Dorsolateral prefrontal cortex (tissue), 120 donors: ENCODE measurements at regions of chr17 and their contacts with region 1.

Region 1: GRCh38 chr17:76523084-76524037 is 14.1 kb downstream of the CYGB start:
- DNase-seq: peak in 9 of 10 donors; percentile 60 to 88 (median 68)
- H3K4me3 ChIP-seq: peak overlapping the region in 22 of 59 donors; percentile 2 to 38 (median 24)
- H3K27ac ChIP-seq: peak overlapping the region in 3 of 59 donors; percentile 21 to 40 (median 38)
- H3K27me3 ChIP-seq: no peaks in the 10 kb centered on the region
- CTCF ChIP-seq: peak; percentile 93 to 100 (median 100)

Region 2: DNA sequence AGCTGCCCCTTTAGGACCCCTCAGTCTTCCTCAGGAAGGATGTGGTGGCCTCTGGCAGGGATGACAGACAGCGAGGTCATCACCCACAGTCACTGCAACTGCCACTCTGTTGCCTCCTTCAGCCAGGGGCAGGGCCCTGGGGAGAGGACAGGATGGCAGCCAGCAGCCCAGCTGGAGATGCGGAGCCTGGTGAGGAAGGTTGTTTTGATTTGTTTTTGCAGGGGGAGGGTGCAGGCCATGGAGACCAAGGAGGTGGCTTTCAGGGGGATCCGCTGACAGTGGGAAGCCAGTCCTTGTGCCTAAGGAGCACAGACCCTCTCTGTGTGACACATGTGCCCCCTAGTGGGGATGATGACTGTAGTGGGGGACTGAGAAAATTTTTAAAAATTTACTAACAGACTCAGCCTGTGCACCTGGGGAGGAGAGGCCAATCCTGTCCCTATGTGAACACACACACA is 23.9 kb after region 1 on chr17:
- intact Hi-C with region 1: loop called (anchors 1 to 2 kb)
- DNase-seq: peak in 6 of 10 donors; percentile 59 to 73 (median 70)
- H3K4me3 ChIP-seq: peak overlapping the region in 3 of 59 donors; percentile 7 to 68 (median 22)
- H3K27ac ChIP-seq: peak overlapping the region in 47 of 59 donors; percentile 1 to 98 (median 65)
- H3K27me3 ChIP-seq: no peaks in the 10 kb centered on the region
- CTCF ChIP-seq: peak; percentile 54 to 88 (median 76)

Region 3: GRCh38 chr17:76585818-76586593 is 62.6 kb after region 1 on chr17 and contains the start of gene ST6GALNAC2:
- intact Hi-C with region 1: loop called in 1 of 2 experiments (anchors 2 kb)
- DNase-seq: peak in 1 of 10 donors; percentile 64
- H3K4me3 ChIP-seq: peak within 1 kb of the TSS; percentile 26 to 72 (median 54)
- H3K27ac ChIP-seq: peak within 1 kb of the TSS in 1 of 59 donors; percentile 36
- H3K27me3 ChIP-seq: peaks cover 0 to 36% (median 18%) of the 10 kb centered on the region in 45 donors
- CTCF ChIP-seq: peak in 41 of 56 donors; percentile 7 to 65 (median 33)
- total RNA-seq, gene ST6GALNAC2: 0.38 to 10.0 (median 1.8) TPM in 115 of 120 experiments, not detected in the others

Region 4: GRCh38 chr17:76623271-76624146 is 100.1 kb after region 1 on chr17:
- intact Hi-C with region 1: loop called (anchors 2 to 10 kb)
- DNase-seq: peak; percentile 61 to 85 (median 68)
- H3K4me3 ChIP-seq: peak overlapping the region in 2 of 59 donors; percentile 23 to 28
- H3K27ac ChIP-seq: no peak overlapping the region
- H3K27me3 ChIP-seq: no peaks in the 10 kb centered on the region
- CTCF ChIP-seq: peak; percentile 83 to 99 (median 96)

Region 5: DNA sequence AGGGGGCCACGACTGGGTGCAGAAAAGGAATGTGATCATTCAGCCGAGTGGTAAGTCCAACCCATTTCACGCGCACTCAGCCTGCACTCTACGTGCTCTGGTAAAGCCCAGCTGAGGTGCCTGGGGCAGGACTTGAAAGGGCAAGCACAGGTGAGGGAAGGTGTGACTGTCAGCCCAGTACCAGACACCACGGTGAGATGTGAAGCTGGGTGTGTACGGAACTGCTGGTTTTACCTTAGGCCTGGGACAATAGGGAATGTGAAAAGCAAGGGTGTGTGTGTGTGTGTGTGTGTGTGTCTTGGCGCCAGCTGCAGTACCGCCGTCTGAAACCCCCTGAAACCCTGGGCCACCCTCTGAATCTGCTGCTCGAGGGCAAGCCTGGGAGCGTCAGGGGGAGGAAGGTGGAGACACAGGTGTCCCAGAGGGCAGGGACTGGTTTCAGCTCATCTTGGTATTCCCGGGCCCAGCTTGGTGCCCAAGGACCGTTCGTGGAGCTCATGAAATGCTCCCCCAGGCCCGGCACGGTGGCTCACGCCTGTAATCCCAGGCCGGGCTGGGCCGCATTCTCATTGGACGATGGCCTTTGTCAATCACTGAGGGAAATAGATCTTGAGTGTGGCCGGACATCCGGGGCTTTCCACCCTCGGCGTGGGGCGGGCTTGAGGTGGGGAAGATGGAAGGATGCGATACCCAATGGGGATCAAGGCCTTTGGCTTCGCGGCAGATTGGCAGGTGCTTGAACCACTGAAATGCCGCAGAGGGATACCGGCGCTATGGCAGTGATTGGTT is 148.0 kb after region 1 on chr17:
- intact Hi-C with region 1: loop called in 1 of 2 experiments (anchors 10 kb)
- DNase-seq: peak; percentile 100
- H3K4me3 ChIP-seq: peak overlapping the region; percentile 34 to 96 (median 75)
- H3K27ac ChIP-seq: peak overlapping the region; percentile 16 to 97 (median 90)
- H3K27me3 ChIP-seq: no peaks in the 10 kb centered on the region
- CTCF ChIP-seq: peak in 10 of 56 donors; percentile 3 to 34 (median 14)

Region 6: GRCh38 chr17:76893623-76894334 is 370.4 kb after region 1 on chr17:
- intact Hi-C with region 1: no loop called
- DNase-seq: peak in 1 of 10 donors; percentile 51
- H3K4me3 ChIP-seq: no peak overlapping the region
- H3K27ac ChIP-seq: peak overlapping the region in 39 of 59 donors; percentile 6 to 82 (median 55)
- H3K27me3 ChIP-seq: no peaks in the 10 kb centered on the region
- CTCF ChIP-seq: no peak